Activated naive CD4-positive, alpha-beta T cell treated with anti-CD3 and anti-CD28 coated beads for 36 hours (primary cell): ENCODE measurements at regions of chr7 and their contacts with region 1.

Region 1: GRCh38 chr7:129952653-129953560 is at the start of gene UBE2H:
- DNase-seq: peak; percentile 91
- H3K4me3 Mint-ChIP-seq: peak within 1 kb of the TSS; percentile 99
- H3K27ac Mint-ChIP-seq: peak within 1 kb of the TSS; percentile 96
- H3K4me1 Mint-ChIP-seq: peaks cover 4% of the 10 kb centered on the region
- H3K27me3 Mint-ChIP-seq: no peaks in the 10 kb centered on the region
- total RNA-seq, gene UBE2H: 33.4 to 37.6 TPM

Region 2: GRCh38 chr7:129530795-129531391 is 422.0 kb before region 1 on chr7:
- CTCF ChIA-PET with region 1: no interaction called
- intact Hi-C with region 1: loop called (anchors 1 kb)
- DNase-seq: peak; percentile 71
- H3K4me3 Mint-ChIP-seq: no peak overlapping the region
- H3K27ac Mint-ChIP-seq: no peak overlapping the region
- H3K4me1 Mint-ChIP-seq: peaks cover 11% of the 10 kb centered on the region
- H3K27me3 Mint-ChIP-seq: peaks cover 3% of the 10 kb centered on the region

Region 3: GRCh38 chr7:129845178-129845971 is 107.5 kb before region 1 on chr7:
- CTCF ChIA-PET with region 1: no interaction called
- intact Hi-C with region 1: loop called (anchors 2 kb)
- DNase-seq: no peak
- H3K4me3 Mint-ChIP-seq: no peak overlapping the region
- H3K27ac Mint-ChIP-seq: peak overlapping the region; percentile 22
- H3K4me1 Mint-ChIP-seq: peaks cover 50% of the 10 kb centered on the region
- H3K27me3 Mint-ChIP-seq: no peaks in the 10 kb centered on the region

Region 4: DNA sequence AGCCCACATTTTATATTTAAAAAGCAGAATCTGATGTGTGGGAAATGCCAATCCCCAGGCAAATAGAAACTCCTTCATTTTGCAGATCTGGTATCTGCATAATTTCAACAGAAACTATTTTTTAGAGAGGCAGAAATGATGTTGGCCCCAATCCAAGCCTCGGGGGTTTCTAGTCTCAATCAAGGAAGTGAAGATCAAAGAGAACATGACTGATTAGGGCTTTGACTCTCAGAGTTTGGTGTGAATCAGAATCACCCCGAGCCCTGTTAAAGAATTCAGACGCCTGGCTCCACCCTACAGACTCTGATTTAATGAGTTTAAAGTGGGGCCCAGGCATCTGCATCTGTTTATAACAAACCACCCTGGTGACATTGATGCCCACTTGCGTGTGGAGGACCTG is 36.6 kb after region 1 on chr7:
- CTCF ChIA-PET with region 1: no interaction called
- intact Hi-C with region 1: loop called (anchors 1 kb)
- DNase-seq: peak; percentile 90
- H3K4me3 Mint-ChIP-seq: no peak overlapping the region
- H3K27ac Mint-ChIP-seq: no peak overlapping the region
- H3K4me1 Mint-ChIP-seq: peaks cover 13% of the 10 kb centered on the region
- H3K27me3 Mint-ChIP-seq: no peaks in the 10 kb centered on the region

Region 5: GRCh38 chr7:130182990-130183389 is 230.1 kb after region 1 on chr7:
- CTCF ChIA-PET with region 1: no interaction called
- intact Hi-C with region 1: loop called (anchors 1 kb)
- DNase-seq: no peak
- H3K4me3 Mint-ChIP-seq: no peak overlapping the region
- H3K27ac Mint-ChIP-seq: peak overlapping the region; percentile 65
- H3K4me1 Mint-ChIP-seq: peaks cover 30% of the 10 kb centered on the region
- H3K27me3 Mint-ChIP-seq: no peaks in the 10 kb centered on the region

Region 6: GRCh38 chr7:131107337-131108211 is 1154.7 kb after region 1 on chr7:
- CTCF ChIA-PET with region 1: no interaction called
- intact Hi-C with region 1: loop called (anchors 2 kb)
- DNase-seq: peak; percentile 82
- H3K4me3 Mint-ChIP-seq: peak overlapping the region; percentile 98
- H3K27ac Mint-ChIP-seq: peak overlapping the region; percentile 97
- H3K4me1 Mint-ChIP-seq: peaks cover 57% of the 10 kb centered on the region
- H3K27me3 Mint-ChIP-seq: peaks cover 2% of the 10 kb centered on the region